Mammary epithelial cell (primary cell): ENCODE measurements at regions of chr20 and their contacts with region 1.

Region 1: GRCh38 chr20:11890331-11891080 is 27.2 kb upstream of the BTBD3 start:
- DNase-seq: peak; percentile 84
- H3K4me3 ChIP-seq: peak overlapping the region; percentile 68 to 96 (median 75)
- H3K27ac ChIP-seq: peak overlapping the region; percentile 82
- H3K4me1 ChIP-seq: peaks cover 19% of the 10 kb centered on the region
- H3K27me3 ChIP-seq: no peaks in the 10 kb centered on the region
- CTCF ChIP-seq: no peak

Region 2: GRCh38 chr20:11766976-11767375 is 123.5 kb before region 1 on chr20:
- CTCF ChIA-PET with region 1: no interaction called
- dilution Hi-C with region 1: no loop called
- in situ Hi-C with region 1: no loop called
- intact Hi-C with region 1: loop called (anchors 5 kb)
- DNase-seq: no peak
- H3K4me3 ChIP-seq: no peak overlapping the region
- H3K27ac ChIP-seq: no peak overlapping the region
- H3K4me1 ChIP-seq: peaks cover 4% of the 10 kb centered on the region
- H3K27me3 ChIP-seq: no peaks in the 10 kb centered on the region
- CTCF ChIP-seq: no peak

Region 3: GRCh38 chr20:11807066-11808048 is 83.1 kb before region 1 on chr20:
- CTCF ChIA-PET with region 1: no interaction called
- dilution Hi-C with region 1: no loop called
- in situ Hi-C with region 1: no loop called
- intact Hi-C with region 1: loop called (anchors 5 kb)
- DNase-seq: peak; percentile 63
- H3K4me3 ChIP-seq: no peak overlapping the region
- H3K27ac ChIP-seq: no peak overlapping the region
- H3K4me1 ChIP-seq: peaks cover 30% of the 10 kb centered on the region
- H3K27me3 ChIP-seq: no peaks in the 10 kb centered on the region
- CTCF ChIP-seq: no peak

Region 4: GRCh38 chr20:11849976-11850670 is 40.4 kb before region 1 on chr20:
- CTCF ChIA-PET with region 1: no interaction called
- dilution Hi-C with region 1: no loop called
- in situ Hi-C with region 1: no loop called
- intact Hi-C with region 1: loop called (anchors 1 kb)
- DNase-seq: peak; percentile 93
- H3K4me3 ChIP-seq: peak overlapping the region in 2 of 3 experiments; percentile 39 to 41
- H3K27ac ChIP-seq: peak overlapping the region; percentile 89
- H3K4me1 ChIP-seq: peaks cover 43% of the 10 kb centered on the region
- H3K27me3 ChIP-seq: no peaks in the 10 kb centered on the region
- CTCF ChIP-seq: no peak

Region 5: GRCh38 chr20:11912013-11912658 is 21.6 kb after region 1 on chr20:
- CTCF ChIA-PET with region 1: no interaction called
- dilution Hi-C with region 1: no loop called
- in situ Hi-C with region 1: no loop called
- intact Hi-C with region 1: loop called (anchors 2 kb)
- DNase-seq: no peak
- H3K4me3 ChIP-seq: no peak overlapping the region
- H3K27ac ChIP-seq: no peak overlapping the region
- H3K4me1 ChIP-seq: peaks cover 45% of the 10 kb centered on the region
- H3K27me3 ChIP-seq: no peaks in the 10 kb centered on the region
- CTCF ChIP-seq: peak; percentile 57 to 64

Region 6: DNA sequence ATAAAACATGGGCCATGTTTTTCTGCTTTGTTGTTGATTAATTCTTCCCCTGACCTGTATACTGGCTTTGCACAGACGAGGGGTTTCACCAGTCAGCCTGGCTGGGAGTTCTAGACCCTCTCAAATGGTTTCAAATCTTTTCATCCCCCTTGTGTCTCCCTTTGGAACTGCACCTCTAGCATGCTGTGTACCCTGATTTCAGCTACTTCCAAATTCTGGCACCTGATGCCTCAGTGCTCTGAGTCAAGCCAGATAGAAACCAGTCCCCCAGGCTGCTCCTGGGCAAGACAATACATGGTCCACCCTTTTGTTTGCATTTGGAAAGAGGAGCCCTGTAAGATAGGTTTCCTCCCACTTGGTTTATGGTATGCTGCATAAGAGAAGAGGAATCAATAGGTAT is 317.4 kb after region 1 on chr20:
- CTCF ChIA-PET with region 1: no interaction called
- dilution Hi-C with region 1: no loop called
- in situ Hi-C with region 1: no loop called
- intact Hi-C with region 1: loop called (anchors 10 kb)
- DNase-seq: peak; percentile 47
- H3K4me3 ChIP-seq: no peak overlapping the region
- H3K27ac ChIP-seq: no peak overlapping the region
- H3K4me1 ChIP-seq: no peaks in the 10 kb centered on the region
- H3K27me3 ChIP-seq: peaks cover 1% of the 10 kb centered on the region
- CTCF ChIP-seq: peak; percentile 75 to 84